ENCODE measurements at regions of chr5 and their contacts with region 1.

Region 1: DNA sequence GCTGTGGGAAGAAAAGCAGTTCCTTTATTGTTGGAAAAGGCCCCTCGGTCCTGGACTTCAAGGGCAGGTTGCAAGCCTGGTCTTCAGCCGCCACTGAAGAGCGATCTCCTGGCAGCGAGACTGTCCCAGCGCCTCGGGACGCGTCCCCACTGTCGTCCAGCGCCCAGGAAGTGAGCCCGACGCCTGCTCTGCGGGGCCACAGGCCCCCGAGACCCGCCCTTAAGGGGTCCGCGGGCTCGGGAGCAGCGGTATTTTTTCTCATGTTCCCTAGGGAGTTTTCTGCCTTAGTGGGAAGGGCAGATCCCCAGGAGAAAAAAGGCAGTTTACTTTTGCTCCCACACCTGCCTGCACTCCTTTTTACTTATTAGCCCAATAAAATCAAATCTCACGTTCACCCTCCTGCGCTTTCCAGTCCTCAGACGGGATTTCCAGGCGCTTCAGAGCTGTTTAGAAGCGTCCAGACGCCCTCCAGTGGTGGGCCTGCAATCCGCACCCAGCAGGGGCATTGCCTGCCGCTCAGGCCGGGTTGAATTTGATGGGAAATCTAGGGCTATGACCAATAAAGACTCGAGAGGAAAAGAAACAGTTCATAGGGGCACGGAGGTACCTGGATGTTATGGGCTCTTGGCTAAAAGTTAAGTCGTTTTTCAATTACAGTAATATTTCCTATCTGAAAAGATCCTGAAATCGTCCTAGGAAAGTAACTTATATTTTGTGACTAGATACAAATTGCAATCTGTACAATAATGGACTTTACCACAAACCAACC is 2.8 kb upstream of the EFNA5 start:
- DNase-seq: peak; percentile 86
- ATAC-seq: peak; percentile 71
- H3K4me3 ChIP-seq: peak overlapping the region; percentile 48 to 63
- H3K27ac ChIP-seq: no peak overlapping the region; the same call in 1 of the 2 replicates
- H3K4me1 ChIP-seq: peaks cover 8 to 36% of the 10 kb centered on the region in 2 experiments; a peak in 3 of 4 replicates
- H3K27me3 ChIP-seq: no peaks in the 10 kb centered on the region
- CTCF ChIP-seq: peak; percentile 75 to 98 (median 97); a peak in 5 of 6 replicates
- POLR2A ChIP-seq: no peak
- RAD21 ChIP-seq: peak; percentile 95

Region 2: GRCh38 chr5:106121972-106122605 is 1551.5 kb before region 1 on chr5:
- CTCF ChIA-PET with region 1: no interaction called
- POLR2A ChIA-PET with region 1: no interaction called
- RAD21 ChIA-PET with region 1: no interaction called
- intact Hi-C with region 1: loop called (anchors 5 kb)
- DNase-seq: peak; percentile 8
- ATAC-seq: peak; percentile 96
- H3K4me3 ChIP-seq: no peak overlapping the region
- H3K27ac ChIP-seq: no peak overlapping the region
- H3K4me1 ChIP-seq: no peaks in the 10 kb centered on the region
- H3K27me3 ChIP-seq: no peaks in the 10 kb centered on the region
- CTCF ChIP-seq: peak; percentile 25 to 96 (median 96); a peak in 5 of 6 replicates
- POLR2A ChIP-seq: no peak
- RAD21 ChIP-seq: peak; percentile 69

Region 3: GRCh38 chr5:106269252-106269843 is 1404.2 kb before region 1 on chr5:
- CTCF ChIA-PET with region 1: no interaction called
- POLR2A ChIA-PET with region 1: no interaction called
- RAD21 ChIA-PET with region 1: no interaction called
- intact Hi-C with region 1: loop called (anchors 10 kb)
- DNase-seq: peak; percentile 24
- ATAC-seq: peak; percentile 75
- H3K4me3 ChIP-seq: no peak overlapping the region
- H3K27ac ChIP-seq: no peak overlapping the region
- H3K4me1 ChIP-seq: no peaks in the 10 kb centered on the region
- H3K27me3 ChIP-seq: no peaks in the 10 kb centered on the region
- CTCF ChIP-seq: peak; percentile 22 to 65 (median 49); a peak in 4 of 6 replicates
- POLR2A ChIP-seq: no peak
- RAD21 ChIP-seq: peak; percentile 62

Region 4: GRCh38 chr5:106454651-106455415 is 1218.7 kb before region 1 on chr5:
- CTCF ChIA-PET with region 1: no interaction called
- POLR2A ChIA-PET with region 1: no interaction called
- RAD21 ChIA-PET with region 1: no interaction called
- intact Hi-C with region 1: loop called (anchors 10 kb)
- DNase-seq: peak; percentile 59
- ATAC-seq: peak; percentile 89
- H3K4me3 ChIP-seq: no peak overlapping the region
- H3K27ac ChIP-seq: no peak overlapping the region
- H3K4me1 ChIP-seq: peaks cover 0 to 9% of the 10 kb centered on the region in 2 experiments; a peak in 2 of 4 replicates
- H3K27me3 ChIP-seq: no peaks in the 10 kb centered on the region
- CTCF ChIP-seq: peak; percentile 23 to 77 (median 73); a peak in 4 of 6 replicates
- POLR2A ChIP-seq: no peak
- RAD21 ChIP-seq: peak; percentile 55

Region 5: GRCh38 chr5:106986006-106986405 is 687.5 kb before region 1 on chr5:
- CTCF ChIA-PET with region 1: no interaction called
- POLR2A ChIA-PET with region 1: no interaction called
- RAD21 ChIA-PET with region 1: no interaction called
- intact Hi-C with region 1: no loop called
- DNase-seq: no peak
- ATAC-seq: no peak
- H3K4me3 ChIP-seq: no peak overlapping the region
- H3K27ac ChIP-seq: no peak overlapping the region
- H3K4me1 ChIP-seq: no peaks in the 10 kb centered on the region
- H3K27me3 ChIP-seq: no peaks in the 10 kb centered on the region
- CTCF ChIP-seq: no peak
- POLR2A ChIP-seq: no peak
- RAD21 ChIP-seq: no peak

Region 6: GRCh38 chr5:107248066-107248695 is 425.4 kb before region 1 on chr5:
- CTCF ChIA-PET with region 1: interaction called, 3 read pairs
- POLR2A ChIA-PET with region 1: no interaction called
- RAD21 ChIA-PET with region 1: no interaction called
- intact Hi-C with region 1: loop called (anchors 10 kb)
- DNase-seq: peak; percentile 53
- ATAC-seq: peak; percentile 73
- H3K4me3 ChIP-seq: no peak overlapping the region
- H3K27ac ChIP-seq: no peak overlapping the region
- H3K4me1 ChIP-seq: no peaks in the 10 kb centered on the region
- H3K27me3 ChIP-seq: no peaks in the 10 kb centered on the region
- CTCF ChIP-seq: peak; percentile 41 to 97 (median 81); a peak in 5 of 6 replicates
- POLR2A ChIP-seq: no peak
- RAD21 ChIP-seq: peak; percentile 71

Region 7: DNA sequence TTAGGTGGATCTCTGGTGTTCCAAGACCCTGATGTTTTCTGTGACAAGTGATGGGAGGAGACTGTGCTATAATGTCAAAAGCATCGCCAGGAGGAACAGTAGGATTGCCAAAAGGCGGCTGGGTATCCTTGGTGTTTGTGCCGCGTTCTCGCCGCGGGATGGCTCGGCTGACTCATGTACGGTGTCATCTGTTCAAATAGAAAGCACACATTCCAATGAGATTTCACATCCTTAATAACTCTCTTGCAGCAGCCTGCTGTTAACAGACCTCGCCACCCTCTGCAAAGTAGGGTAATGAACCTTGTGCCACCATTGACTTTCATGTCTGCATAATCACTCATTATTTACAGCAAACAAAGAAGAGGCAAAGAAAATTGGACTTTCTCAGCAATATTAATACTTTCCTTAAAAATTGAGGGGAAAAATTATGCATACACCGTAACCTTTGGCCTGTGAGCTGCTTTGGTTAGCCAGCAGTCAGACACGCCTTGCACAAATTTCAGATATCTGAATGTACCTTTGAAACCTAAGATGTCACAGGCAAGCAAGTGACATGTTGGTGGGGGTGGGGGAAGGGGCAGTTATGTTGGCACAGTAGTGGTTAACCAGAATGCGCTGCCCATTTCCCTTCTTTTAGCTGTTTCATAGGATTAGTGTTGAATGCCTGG is 292.2 kb before region 1 on chr5:
- CTCF ChIA-PET with region 1: no interaction called
- POLR2A ChIA-PET with region 1: no interaction called
- RAD21 ChIA-PET with region 1: no interaction called
- intact Hi-C with region 1: no loop called
- DNase-seq: peak; percentile 64
- ATAC-seq: peak; percentile 91
- H3K4me3 ChIP-seq: peak overlapping the region; percentile 5 to 41; a peak in 2 of 4 replicates
- H3K27ac ChIP-seq: no peak overlapping the region
- H3K4me1 ChIP-seq: peaks cover 12 to 22% of the 10 kb centered on the region in 2 experiments
- H3K27me3 ChIP-seq: no peaks in the 10 kb centered on the region
- CTCF ChIP-seq: no peak
- POLR2A ChIP-seq: no peak
- RAD21 ChIP-seq: peak; percentile 40

Region 8: DNA sequence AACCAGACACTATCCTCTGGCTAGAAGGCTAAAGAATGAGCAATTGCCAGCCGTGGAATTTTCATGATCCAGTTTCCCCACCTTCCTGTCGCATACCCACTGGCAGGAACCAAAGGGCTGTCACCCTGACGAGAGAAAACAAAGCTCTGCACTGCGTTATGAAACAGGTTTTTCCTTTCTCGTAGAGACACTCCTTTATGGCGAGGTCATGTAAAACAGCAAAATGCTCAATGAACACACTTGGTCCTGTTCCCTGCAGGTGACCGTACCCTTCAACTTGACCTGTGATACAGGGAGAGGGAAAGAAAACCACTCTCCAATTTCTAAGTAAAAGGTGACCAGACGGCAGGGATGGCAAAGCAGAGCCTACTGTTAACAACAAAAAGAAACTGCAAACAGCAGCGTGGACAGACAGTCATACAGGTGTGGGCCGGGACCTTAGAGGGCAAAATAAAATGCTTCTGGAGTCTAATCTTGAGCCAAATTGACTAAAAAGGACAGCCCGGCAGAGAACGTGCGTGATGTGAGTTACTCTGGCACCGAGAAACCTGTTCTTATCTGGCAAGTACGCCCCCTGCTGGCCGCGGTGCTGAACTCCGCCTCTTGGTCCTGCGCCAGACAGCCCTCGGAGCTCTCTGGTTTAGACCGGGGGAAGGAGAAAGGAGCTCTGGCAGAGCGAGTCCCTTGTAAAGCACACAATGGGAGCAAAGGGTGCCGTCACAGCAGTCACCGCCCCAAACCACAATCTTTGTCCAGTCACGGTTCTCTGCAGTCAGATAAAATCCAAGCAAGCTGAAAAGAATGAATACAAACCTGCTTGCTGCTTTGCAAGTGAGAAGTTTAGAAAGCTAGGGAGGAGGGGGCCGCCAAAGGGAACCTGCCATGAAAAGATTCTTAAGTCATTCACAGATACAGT is 101.7 kb before region 1 on chr5:
- CTCF ChIA-PET with region 1: no interaction called
- POLR2A ChIA-PET with region 1: no interaction called
- RAD21 ChIA-PET with region 1: no interaction called
- intact Hi-C with region 1: loop called (anchors 2 kb)
- DNase-seq: peak; percentile 83
- ATAC-seq: peak; percentile 95
- H3K4me3 ChIP-seq: peak overlapping the region; percentile 41 to 53
- H3K27ac ChIP-seq: no peak overlapping the region
- H3K4me1 ChIP-seq: peaks cover 0 to 17% of the 10 kb centered on the region in 2 experiments; a peak in 2 of 4 replicates
- H3K27me3 ChIP-seq: no peaks in the 10 kb centered on the region
- CTCF ChIP-seq: peak; percentile 48 to 93 (median 89); a peak in 5 of 6 replicates
- POLR2A ChIP-seq: no peak
- RAD21 ChIP-seq: peak; percentile 72

Region 9: DNA sequence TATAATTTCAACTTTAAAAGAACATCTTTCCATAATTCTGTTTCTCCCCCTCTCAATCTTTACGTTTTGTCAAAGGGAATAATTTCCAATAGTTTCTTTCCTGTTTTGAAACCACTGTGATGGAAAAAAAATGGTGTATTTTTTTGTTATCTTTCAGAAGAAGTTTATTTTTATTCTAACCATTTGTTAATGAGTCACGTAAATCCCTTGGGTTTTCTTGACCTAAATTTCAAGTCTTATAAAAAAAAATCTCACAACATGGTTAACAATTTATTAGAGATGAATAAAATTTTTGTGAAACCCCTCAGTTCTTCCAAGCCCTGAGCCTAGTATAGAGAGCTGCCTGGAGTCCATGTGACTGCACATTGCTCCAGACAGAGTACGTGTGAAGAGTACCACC is 814.4 kb after region 1 on chr5:
- CTCF ChIA-PET with region 1: no interaction called
- POLR2A ChIA-PET with region 1: no interaction called
- RAD21 ChIA-PET with region 1: no interaction called
- intact Hi-C with region 1: no loop called
- DNase-seq: no peak
- ATAC-seq: no peak
- H3K4me3 ChIP-seq: no peak overlapping the region
- H3K27ac ChIP-seq: no peak overlapping the region
- H3K4me1 ChIP-seq: no peaks in the 10 kb centered on the region
- H3K27me3 ChIP-seq: no peaks in the 10 kb centered on the region
- CTCF ChIP-seq: no peak
- POLR2A ChIP-seq: no peak
- RAD21 ChIP-seq: no peak

Measured in HCT116 (cell line).